Mucosa of descending colon (tissue), 3 donors: ENCODE measurements at regions of chr22 and their contacts with region 1.

Region 1: DNA sequence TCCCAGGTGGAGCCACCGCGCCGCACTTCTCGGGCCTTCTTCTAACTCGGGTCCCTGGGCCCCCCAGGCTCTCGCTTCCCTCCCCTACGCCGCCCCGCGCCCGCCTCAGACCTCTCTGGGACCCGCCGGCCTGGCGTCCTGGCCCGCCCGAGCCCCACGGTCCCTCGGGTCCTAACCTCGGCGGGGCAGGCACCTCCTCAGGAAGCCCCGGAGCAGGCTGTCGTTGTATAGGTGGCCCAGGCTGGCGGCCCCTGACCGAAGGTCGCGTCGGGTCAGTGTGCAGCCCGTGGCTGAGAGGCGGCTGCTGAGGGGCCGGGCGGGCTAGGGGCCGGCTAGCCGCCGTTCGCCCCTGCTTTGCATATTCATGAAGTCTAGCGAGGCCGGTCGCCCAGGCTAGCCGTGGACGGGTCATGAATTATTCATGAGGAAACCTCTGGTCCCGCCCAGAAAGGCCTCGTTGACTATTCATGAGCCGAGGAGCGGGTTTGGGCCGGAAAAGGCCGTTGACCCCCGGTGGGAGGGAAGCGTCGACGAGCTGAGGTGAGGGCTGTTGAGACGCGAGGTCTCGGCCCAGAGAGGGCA is at the start of gene HORMAD2:
- DNase-seq: peak in 1 of 3 donors; percentile 58
- ATAC-seq: no peak
- H3K4me3 ChIP-seq: no peak within 1 kb of the TSS
- H3K4me1 ChIP-seq: no peaks in the 10 kb centered on the region
- CTCF ChIP-seq: no peak
- total RNA-seq, gene HORMAD2: not detected

Region 2: GRCh38 chr22:29580200-29580810 is 499.7 kb before region 1 on chr22:
- intact Hi-C with region 1: loop called in 1 of 2 experiments (anchors 10 kb)
- DNase-seq: peak; percentile 29 to 59 (median 53)
- ATAC-seq: peak; percentile 31
- H3K4me3 ChIP-seq: peak overlapping the region; percentile 22
- H3K4me1 ChIP-seq: peaks cover 8% of the 10 kb centered on the region
- CTCF ChIP-seq: no peak

Region 3: GRCh38 chr22:29625090-29625825 is 454.8 kb before region 1 on chr22:
- intact Hi-C with region 1: loop called in 1 of 2 experiments (anchors 10 kb)
- DNase-seq: peak in 1 of 3 donors; percentile 71
- ATAC-seq: peak; percentile 78
- H3K4me3 ChIP-seq: no peak overlapping the region
- H3K4me1 ChIP-seq: peaks cover 5% of the 10 kb centered on the region
- CTCF ChIP-seq: peak; percentile 82